PC-9 (cell line): ENCODE measurements at regions of chr10 and their contacts with region 1.

Region 1: GRCh38 chr10:58291538-58292174 is 22.7 kb downstream of the CISD1 start:
- DNase-seq: peak; percentile 35 to 42
- H3K4me3 ChIP-seq: no peak overlapping the region
- H3K27ac ChIP-seq: no peak overlapping the region
- H3K4me1 ChIP-seq: no peaks in the 10 kb centered on the region
- H3K27me3 ChIP-seq: no peaks in the 10 kb centered on the region
- CTCF ChIP-seq: peak; percentile 91

Region 2: DNA sequence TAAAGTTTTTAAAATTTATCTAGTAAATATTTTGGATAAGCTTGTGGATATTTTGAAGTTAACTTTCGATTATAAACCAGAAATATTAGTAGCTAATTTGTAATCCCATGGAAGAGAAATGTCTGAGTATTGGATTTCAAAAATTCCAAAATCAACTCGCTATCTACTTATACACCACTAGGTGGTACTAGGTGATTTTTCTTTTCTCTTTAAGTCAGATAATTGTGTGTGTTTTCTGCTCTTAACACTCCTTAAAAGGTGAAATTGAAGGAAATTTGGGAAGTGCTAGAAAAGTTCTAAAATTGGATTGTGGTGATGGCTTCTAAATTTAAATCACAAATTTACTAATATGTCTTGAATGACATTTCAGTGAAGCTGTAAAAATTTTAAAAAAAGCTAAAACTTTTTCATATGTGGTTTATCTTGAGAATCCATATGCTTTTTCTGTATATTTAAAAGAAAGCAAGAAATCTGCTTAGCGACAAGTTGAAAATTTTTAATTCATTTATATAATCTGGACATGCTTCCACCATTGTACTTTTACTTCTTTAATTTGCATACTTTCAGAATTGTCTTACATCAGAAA is 114.2 kb before region 1 on chr10:
- CTCF ChIA-PET with region 1: interaction called, 23 read pairs
- POLR2A ChIA-PET with region 1: no interaction called
- intact Hi-C with region 1: loop called (anchors 1 kb)
- DNase-seq: no peak
- H3K4me3 ChIP-seq: no peak overlapping the region
- H3K27ac ChIP-seq: no peak overlapping the region
- H3K4me1 ChIP-seq: no peaks in the 10 kb centered on the region
- H3K27me3 ChIP-seq: no peaks in the 10 kb centered on the region
- CTCF ChIP-seq: peak; percentile 91

Region 3: GRCh38 chr10:58201704-58202103 is 90.0 kb before region 1 on chr10:
- CTCF ChIA-PET with region 1: no interaction called
- POLR2A ChIA-PET with region 1: interaction called, 11 read pairs
- intact Hi-C with region 1: no loop called
- DNase-seq: no peak
- H3K4me3 ChIP-seq: no peak overlapping the region
- H3K27ac ChIP-seq: no peak overlapping the region
- H3K4me1 ChIP-seq: no peaks in the 10 kb centered on the region
- H3K27me3 ChIP-seq: no peaks in the 10 kb centered on the region
- CTCF ChIP-seq: no peak

Region 4: GRCh38 chr10:58322072-58322834 is 30.6 kb after region 1 on chr10:
- CTCF ChIA-PET with region 1: no interaction called
- POLR2A ChIA-PET with region 1: no interaction called
- intact Hi-C with region 1: no loop called
- DNase-seq: peak; percentile 9 to 87
- H3K4me3 ChIP-seq: peak overlapping the region; percentile 10; the same call in 1 of the 2 replicates
- H3K27ac ChIP-seq: peak overlapping the region; percentile 59
- H3K4me1 ChIP-seq: peaks cover 33% of the 10 kb centered on the region
- H3K27me3 ChIP-seq: no peaks in the 10 kb centered on the region
- CTCF ChIP-seq: no peak

Region 5: GRCh38 chr10:58531084-58531695 is 239.5 kb after region 1 on chr10:
- CTCF ChIA-PET with region 1: no interaction called
- POLR2A ChIA-PET with region 1: no interaction called
- intact Hi-C with region 1: no loop called
- DNase-seq: peak; percentile 52 to 53
- H3K4me3 ChIP-seq: no peak overlapping the region
- H3K27ac ChIP-seq: no peak overlapping the region
- H3K4me1 ChIP-seq: no peaks in the 10 kb centered on the region
- H3K27me3 ChIP-seq: no peaks in the 10 kb centered on the region
- CTCF ChIP-seq: peak; percentile 88